AG04450 (cell line): ENCODE measurements at regions of chr3 and their contacts with region 1.

Region 1: DNA sequence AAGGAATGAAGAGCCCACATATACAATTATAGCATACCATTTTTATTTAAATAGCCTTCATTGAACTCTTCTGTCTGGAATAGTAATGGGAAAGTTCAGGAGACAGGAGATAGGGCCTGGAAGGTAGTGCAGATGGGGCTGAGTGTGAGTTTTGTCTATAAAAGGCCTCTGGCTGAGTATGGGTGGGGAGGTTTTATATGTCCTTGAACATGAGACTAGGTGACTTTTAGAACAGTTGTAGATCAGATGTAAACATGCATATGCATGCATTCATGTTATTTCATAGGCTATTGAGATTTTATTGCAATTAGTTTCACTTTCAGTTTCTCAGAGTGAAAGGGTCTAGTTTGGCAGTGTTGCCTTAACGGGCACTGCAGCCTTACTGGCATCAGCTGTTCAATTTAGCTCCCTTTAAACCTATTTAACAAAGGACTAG is 27.1 kb downstream of the CGGBP1 start:
- DNase-seq: no peak
- H3K4me3 ChIP-seq: peak overlapping the region; percentile 47
- H3K27ac ChIP-seq: no peak overlapping the region
- H3K27me3 ChIP-seq: no peaks in the 10 kb centered on the region
- CTCF ChIP-seq: no peak

Region 2: GRCh38 chr3:88003115-88003755 is 28.4 kb before region 1 on chr3:
- CTCF ChIA-PET with region 1: interaction called, 12 read pairs
- POLR2A ChIA-PET with region 1: no interaction called
- DNase-seq: peak; percentile 8
- H3K4me3 ChIP-seq: no peak overlapping the region
- H3K27ac ChIP-seq: no peak overlapping the region
- H3K27me3 ChIP-seq: no peaks in the 10 kb centered on the region
- CTCF ChIP-seq: peak; percentile 78

Region 3: DNA sequence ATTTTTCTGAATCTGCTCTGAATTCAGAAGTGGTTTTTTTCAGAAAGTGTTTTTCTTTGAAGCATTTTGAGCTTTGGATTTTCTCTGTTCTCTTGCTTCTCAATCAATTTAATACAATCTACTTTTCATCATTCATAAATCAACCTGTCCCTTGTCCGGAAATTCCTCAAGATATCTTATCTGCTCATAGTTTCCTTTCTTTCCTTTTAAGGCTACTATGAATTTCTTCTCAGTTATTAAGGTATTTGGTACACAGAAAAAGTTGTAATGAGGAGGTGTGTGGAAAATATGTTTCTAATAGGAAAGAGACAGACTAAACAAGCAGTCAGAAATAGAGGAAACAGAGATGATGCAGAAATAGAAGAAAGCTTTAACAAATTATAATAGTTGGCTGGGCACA is 12.8 kb after region 1 on chr3:
- CTCF ChIA-PET with region 1: no interaction called
- POLR2A ChIA-PET with region 1: no interaction called
- DNase-seq: no peak
- H3K4me3 ChIP-seq: no peak overlapping the region
- H3K27ac ChIP-seq: no peak overlapping the region
- H3K27me3 ChIP-seq: no peaks in the 10 kb centered on the region
- CTCF ChIP-seq: no peak